Motor neuron (in vitro differentiated cells): ENCODE measurements at regions of chr14 and their contacts with region 1.

Region 1: GRCh38 chr14:32576088-32576795 is 247.1 kb downstream of the AKAP6 start:
- ATAC-seq: peak; percentile 71 to 86 (median 82)
- H3K4me3 ChIP-seq: no peak overlapping the region
- H3K27ac ChIP-seq: no peak overlapping the region
- H3K4me1 ChIP-seq: peaks cover 25 to 30% of the 10 kb centered on the region in 2 donors

Region 2: DNA sequence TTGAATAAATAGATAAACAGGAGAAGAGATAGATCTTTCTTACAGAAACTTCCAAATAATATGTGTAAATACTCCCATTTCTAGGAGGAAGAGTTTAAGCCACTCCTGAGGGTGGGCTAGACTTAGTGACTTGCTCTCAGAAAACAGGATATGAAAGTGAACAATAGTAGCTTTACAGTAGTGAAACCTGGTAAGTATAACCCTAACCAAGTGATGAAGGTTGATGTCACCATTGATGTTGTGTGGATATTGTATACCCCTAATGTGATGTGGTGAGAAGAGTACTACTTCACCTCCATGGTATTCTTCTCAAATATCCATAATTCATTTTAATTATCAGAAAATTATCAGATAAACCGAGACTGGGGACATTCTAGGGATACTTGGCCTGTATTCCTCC is 226.2 kb before region 1 on chr14:
- in situ Hi-C with region 1: no loop called
- ATAC-seq: no peak
- H3K4me3 ChIP-seq: no peak overlapping the region
- H3K27ac ChIP-seq: no peak overlapping the region
- H3K4me1 ChIP-seq: no peaks in the 10 kb centered on the region

Region 3: DNA sequence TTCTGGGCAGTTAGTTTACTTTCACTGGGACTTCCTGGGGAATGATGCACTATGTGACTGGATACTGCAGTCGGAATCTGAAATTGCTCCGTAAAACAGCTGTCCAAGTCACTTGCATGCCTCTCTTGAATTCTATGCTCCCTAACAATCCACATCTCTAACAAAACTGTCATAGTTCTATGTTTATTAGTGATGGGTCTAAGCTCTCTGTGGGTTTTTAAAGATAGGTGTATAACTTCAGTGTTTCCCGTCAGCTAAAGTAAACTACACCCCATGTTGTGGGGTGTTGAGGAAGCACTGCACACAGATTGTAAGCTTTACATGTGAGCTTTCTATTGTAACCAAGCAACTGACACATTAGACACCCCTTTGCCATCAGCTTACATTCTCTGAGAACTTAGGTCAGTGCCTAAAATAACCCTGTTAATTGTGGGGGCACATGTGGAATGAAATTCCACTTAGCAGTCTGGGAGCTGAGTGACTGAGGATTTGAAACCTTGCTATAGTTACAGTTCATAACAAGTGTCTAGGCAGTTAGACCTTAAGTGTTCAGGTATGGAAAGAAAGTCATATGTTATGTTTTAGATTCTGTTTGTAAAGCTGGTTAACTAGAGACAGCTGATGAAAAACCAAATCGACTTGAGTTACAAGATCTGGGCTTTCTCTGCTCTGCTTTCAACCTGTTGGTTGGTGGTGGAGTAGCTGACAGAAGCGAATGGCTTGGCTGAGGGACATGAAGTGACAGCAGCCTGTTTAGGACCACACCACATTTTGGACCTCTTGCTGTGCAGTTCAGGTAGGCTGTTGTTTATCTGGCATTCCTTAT is 81.4 kb before region 1 on chr14:
- in situ Hi-C with region 1: no loop called
- ATAC-seq: peak in 3 of 8 experiments; percentile 26 to 68 (median 52)
- H3K4me3 ChIP-seq: no peak overlapping the region
- H3K27ac ChIP-seq: no peak overlapping the region
- H3K4me1 ChIP-seq: peaks cover 18% of the 10 kb centered on the region in 2 donors

Region 4: GRCh38 chr14:32524609-32525375 is 51.5 kb before region 1 on chr14:
- in situ Hi-C with region 1: no loop called
- ATAC-seq: peak in 5 of 8 experiments; percentile 36 to 67 (median 59)
- H3K4me3 ChIP-seq: no peak overlapping the region
- H3K27ac ChIP-seq: no peak overlapping the region
- H3K4me1 ChIP-seq: no peaks in the 10 kb centered on the region

Region 5: DNA sequence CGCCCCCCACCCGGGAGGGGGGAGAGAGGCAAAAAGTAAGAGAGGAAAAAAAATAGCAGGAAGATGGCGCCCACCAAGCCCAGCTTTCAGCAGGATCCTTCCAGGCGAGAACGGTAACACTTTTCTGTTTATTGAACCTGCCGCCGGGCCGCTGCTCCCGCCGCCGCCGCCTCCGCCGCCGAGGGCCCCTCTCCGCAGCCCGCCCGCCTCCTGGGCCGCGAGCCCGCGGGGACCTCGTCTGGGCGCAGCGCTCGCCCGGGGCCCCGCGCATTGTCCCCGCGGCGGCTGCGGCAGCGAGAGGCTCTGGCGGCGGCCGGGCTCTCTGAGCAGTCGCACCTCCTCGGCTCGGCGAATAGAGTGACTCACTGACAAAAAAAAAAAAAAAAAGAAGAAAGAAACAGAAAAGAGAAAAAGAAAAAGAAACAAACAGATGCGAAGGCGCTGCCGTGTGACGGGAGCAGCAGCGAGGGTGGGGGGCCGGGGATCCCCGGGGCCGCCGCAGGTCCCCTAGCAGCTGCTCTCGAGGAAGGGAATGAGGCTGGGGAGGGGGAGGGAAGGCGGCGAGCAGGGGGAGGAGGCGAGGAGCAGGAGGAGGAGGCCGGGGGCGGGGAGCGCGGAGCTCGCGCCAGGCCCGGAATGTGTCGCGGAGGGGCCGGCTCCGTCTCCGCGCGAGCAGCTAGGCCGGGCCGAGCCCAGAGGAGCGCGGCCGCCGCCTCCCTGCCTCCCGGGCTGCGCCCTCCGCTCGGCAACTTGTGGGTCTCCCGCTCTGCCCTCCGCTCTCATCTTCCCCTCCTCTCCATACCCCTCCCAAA is 363.2 kb after region 1 on chr14:
- in situ Hi-C with region 1: loop called in 1 of 9 experiments (anchors 25 kb)
- ATAC-seq: peak; percentile 69 to 82 (median 76)
- H3K4me3 ChIP-seq: peak overlapping the region; percentile 56 to 94 (median 77)
- H3K27ac ChIP-seq: peak overlapping the region; percentile 75 to 95
- H3K4me1 ChIP-seq: peaks cover 3 to 13% of the 10 kb centered on the region in 2 donors

Region 6: GRCh38 chr14:32998433-32998832 is 422.2 kb after region 1 on chr14:
- in situ Hi-C with region 1: loop called in 1 of 9 experiments (anchors 25 kb)
- ATAC-seq: peak in 1 of 8 experiments; percentile 39
- H3K4me3 ChIP-seq: no peak overlapping the region
- H3K27ac ChIP-seq: no peak overlapping the region
- H3K4me1 ChIP-seq: no peaks in the 10 kb centered on the region

Region 7: DNA sequence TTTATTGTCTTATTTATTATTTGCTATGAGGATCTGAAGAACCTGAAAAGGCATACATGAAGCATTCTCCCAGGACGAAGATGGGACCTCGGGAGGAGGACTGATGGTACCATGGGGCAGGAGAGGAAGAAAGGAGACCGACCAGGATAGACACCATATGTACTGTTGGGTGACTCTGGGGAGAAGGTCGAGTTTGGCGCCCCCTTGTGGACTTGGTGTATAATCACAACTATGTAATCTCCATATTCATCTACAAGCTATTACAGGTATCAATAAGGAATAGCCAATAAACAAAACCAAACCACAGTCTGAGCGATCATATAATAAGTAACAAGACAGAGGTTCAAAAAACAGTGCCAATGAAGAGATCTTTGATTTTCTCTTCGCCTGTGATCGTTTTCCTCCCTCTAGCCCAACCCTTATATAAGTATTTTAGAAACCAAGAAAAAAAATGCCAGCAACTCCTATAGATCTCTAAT is 1746.7 kb after region 1 on chr14:
- in situ Hi-C with region 1: loop called in 1 of 9 experiments (anchors 25 kb)
- ATAC-seq: peak in 5 of 8 experiments; percentile 40 to 84 (median 78)
- H3K4me3 ChIP-seq: no peak overlapping the region
- H3K27ac ChIP-seq: no peak overlapping the region
- H3K4me1 ChIP-seq: no peaks in the 10 kb centered on the region